Naive thymus-derived CD4-positive, alpha-beta T cell (primary cell): ENCODE measurements at regions of chr5 and their contacts with region 1.

Region 1: GRCh38 chr5:91280362-91281269 is 102.5 kb downstream of the ARRDC3 start:
- DNase-seq: peak; percentile 45 to 89 (median 63)
- ATAC-seq: peak; percentile 90
- H3K4me3 ChIP-seq: peak overlapping the region; percentile 76
- H3K4me3 Mint-ChIP-seq: peak overlapping the region; percentile 88 to 99 (median 92)
- H3K27ac ChIP-seq: peak overlapping the region; percentile 41
- H3K27ac Mint-ChIP-seq: peak overlapping the region; percentile 74 to 94 (median 91)
- H3K4me1 ChIP-seq: peaks cover 0 to 4% of the 10 kb centered on the region in 2 donors
- H3K4me1 Mint-ChIP-seq: peaks cover 13 to 34% (median 23%) of the 10 kb centered on the region in 7 donors
- H3K27me3 ChIP-seq: no peaks in the 10 kb centered on the region
- H3K27me3 Mint-ChIP-seq: peaks cover 0 to 13% (median 0%) of the 10 kb centered on the region in 5 donors

Region 2: GRCh38 chr5:90409318-90410177 is 871.1 kb before region 1 on chr5 and contains the start of gene CETN3:
- CTCF ChIA-PET with region 1: no interaction called
- POLR2A ChIA-PET with region 1: no interaction called
- intact Hi-C with region 1: loop called in 1 of 2 experiments (anchors 1 kb)
- DNase-seq: peak; percentile 72 to 93 (median 88)
- ATAC-seq: peak; percentile 94
- H3K4me3 ChIP-seq: peak within 1 kb of the TSS; percentile 100
- H3K4me3 Mint-ChIP-seq: no peak within 1 kb of the TSS
- H3K27ac ChIP-seq: peak within 1 kb of the TSS; percentile 93
- H3K27ac Mint-ChIP-seq: no peak within 1 kb of the TSS
- H3K4me1 ChIP-seq: peaks cover 7 to 13% of the 10 kb centered on the region in 2 donors
- H3K4me1 Mint-ChIP-seq: peaks cover 12 to 26% (median 16%) of the 10 kb centered on the region in 7 donors
- H3K27me3 ChIP-seq: no peaks in the 10 kb centered on the region
- H3K27me3 Mint-ChIP-seq: peaks cover 0 to 4% (median 0%) of the 10 kb centered on the region in 5 donors
- total RNA-seq, gene CETN3: 4.4 to 31.0 (median 22.1) TPM

Region 3: GRCh38 chr5:90474235-90475109 is 806.1 kb before region 1 on chr5 and contains the starts of genes MBLAC2 and POLR3G:
- CTCF ChIA-PET with region 1: no interaction called
- POLR2A ChIA-PET with region 1: no interaction called
- intact Hi-C with region 1: loop called in 1 of 2 experiments (anchors 1 kb)
- DNase-seq: peak; percentile 80 to 93 (median 92)
- ATAC-seq: peak; percentile 95
- H3K4me3 ChIP-seq: peak within 1 kb of the TSS; percentile 95
- H3K4me3 Mint-ChIP-seq: peak within 1 kb of the TSS; percentile 90 to 99 (median 98)
- H3K27ac ChIP-seq: peak within 1 kb of the TSS; percentile 76
- H3K27ac Mint-ChIP-seq: peak within 1 kb of the TSS; percentile 86 to 98 (median 94)
- H3K4me1 ChIP-seq: peaks cover 15 to 16% of the 10 kb centered on the region in 2 donors
- H3K4me1 Mint-ChIP-seq: peaks cover 18 to 51% (median 43%) of the 10 kb centered on the region in 7 donors
- H3K27me3 ChIP-seq: no peaks in the 10 kb centered on the region
- H3K27me3 Mint-ChIP-seq: no peaks in the 10 kb centered on the region
- total RNA-seq, gene MBLAC2: 5.2 to 17.6 (median 7.1) TPM
- total RNA-seq, gene POLR3G: 0.51 to 3.0 (median 1.5) TPM

Region 4: DNA sequence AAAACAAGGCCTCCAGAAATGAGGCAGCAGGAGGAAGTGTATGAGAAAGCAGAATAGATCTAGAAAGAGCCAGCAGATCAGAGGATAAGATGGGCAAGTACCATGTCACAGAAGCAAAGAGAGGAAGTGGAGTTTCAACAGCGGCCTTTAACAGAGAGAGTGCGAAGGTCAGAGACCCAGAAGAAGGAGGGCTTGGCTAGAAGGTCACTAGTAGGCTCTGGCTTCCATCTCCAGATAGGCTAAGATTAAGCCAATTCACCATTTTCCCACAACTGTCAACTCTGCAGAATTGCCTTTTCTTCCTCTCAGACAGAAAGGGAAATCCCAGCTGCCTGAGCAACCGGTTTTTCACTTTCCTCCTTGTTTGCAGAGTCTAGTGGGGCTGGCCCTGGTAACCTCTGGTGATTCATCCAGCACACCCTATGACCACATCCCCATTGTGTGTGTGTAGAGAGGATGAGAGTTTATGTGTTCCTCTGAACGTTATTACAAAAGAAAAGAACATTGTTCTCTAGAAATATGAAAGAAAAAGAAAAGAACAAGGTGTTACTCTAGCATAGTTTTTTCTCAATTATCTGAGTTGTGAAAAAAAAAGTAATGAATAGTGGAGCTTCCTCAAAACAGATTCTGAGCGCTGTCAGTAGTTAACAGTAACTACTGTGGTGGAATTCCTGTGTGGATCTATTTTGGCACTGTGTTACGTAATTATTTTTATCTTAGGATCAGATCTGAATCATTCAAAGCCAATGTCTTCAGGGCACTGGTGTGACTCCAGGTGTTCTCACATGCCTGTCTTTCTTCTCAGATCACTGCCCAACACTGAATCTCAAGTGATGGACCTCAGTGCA is 117.9 kb before region 1 on chr5:
- CTCF ChIA-PET with region 1: no interaction called
- POLR2A ChIA-PET with region 1: no interaction called
- intact Hi-C with region 1: loop called in 1 of 2 experiments (anchors 5 kb)
- DNase-seq: peak in 2 of 9 donors; percentile 8 to 64
- ATAC-seq: peak; percentile 93
- H3K4me3 ChIP-seq: no peak overlapping the region
- H3K4me3 Mint-ChIP-seq: peak overlapping the region in 3 of 10 donors; percentile 0 to 46 (median 1)
- H3K27ac ChIP-seq: no peak overlapping the region
- H3K27ac Mint-ChIP-seq: peak overlapping the region in 4 of 9 donors; percentile 10 to 71 (median 35)
- H3K4me1 ChIP-seq: no peaks in the 10 kb centered on the region
- H3K4me1 Mint-ChIP-seq: peaks cover 5 to 24% (median 13%) of the 10 kb centered on the region in 7 donors
- H3K27me3 ChIP-seq: no peaks in the 10 kb centered on the region
- H3K27me3 Mint-ChIP-seq: no peaks in the 10 kb centered on the region

Region 5: GRCh38 chr5:91245871-91246270 is 34.7 kb before region 1 on chr5:
- CTCF ChIA-PET with region 1: no interaction called
- POLR2A ChIA-PET with region 1: no interaction called
- intact Hi-C with region 1: loop called in 1 of 2 experiments (anchors 5 kb)
- DNase-seq: no peak
- ATAC-seq: no peak
- H3K4me3 ChIP-seq: no peak overlapping the region
- H3K4me3 Mint-ChIP-seq: no peak overlapping the region
- H3K27ac ChIP-seq: no peak overlapping the region
- H3K27ac Mint-ChIP-seq: no peak overlapping the region
- H3K4me1 ChIP-seq: no peaks in the 10 kb centered on the region
- H3K4me1 Mint-ChIP-seq: peaks cover 0 to 3% (median 0%) of the 10 kb centered on the region in 7 donors
- H3K27me3 ChIP-seq: no peaks in the 10 kb centered on the region
- H3K27me3 Mint-ChIP-seq: peaks cover 0 to 6% (median 3%) of the 10 kb centered on the region in 5 donors

Region 6: DNA sequence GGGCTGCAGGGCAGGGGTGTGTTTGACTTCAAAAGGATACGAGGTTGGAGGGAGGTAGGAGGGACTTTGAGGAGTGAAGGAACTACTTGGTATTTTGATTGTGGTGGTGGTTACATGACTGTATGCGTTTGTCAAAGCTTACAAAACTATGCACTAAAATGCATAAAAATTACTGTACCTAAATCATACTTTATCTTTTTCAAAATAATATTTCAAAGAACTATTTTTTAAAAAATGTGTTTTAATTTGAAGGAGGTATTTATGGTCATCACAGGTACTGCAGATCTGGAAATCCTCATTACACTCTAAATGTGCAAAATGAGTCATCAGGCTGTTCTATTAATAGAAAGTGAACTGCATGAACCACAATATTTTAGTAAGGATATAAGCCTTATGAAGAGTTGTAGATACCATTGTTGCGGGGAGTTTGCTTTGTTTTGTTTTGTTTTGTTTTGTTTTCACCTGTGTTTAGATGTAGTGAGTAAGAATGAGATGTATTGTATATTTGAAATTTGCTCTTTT is 14.4 kb before region 1 on chr5:
- CTCF ChIA-PET with region 1: interaction called, 5 read pairs
- POLR2A ChIA-PET with region 1: interaction called, 3 read pairs
- intact Hi-C with region 1: loop called (anchors 1 kb)
- DNase-seq: no peak
- ATAC-seq: peak; percentile 53
- H3K4me3 ChIP-seq: no peak overlapping the region
- H3K4me3 Mint-ChIP-seq: no peak overlapping the region
- H3K27ac ChIP-seq: no peak overlapping the region
- H3K27ac Mint-ChIP-seq: no peak overlapping the region
- H3K4me1 ChIP-seq: no peaks in the 10 kb centered on the region
- H3K4me1 Mint-ChIP-seq: peaks cover 9 to 27% (median 18%) of the 10 kb centered on the region in 7 donors
- H3K27me3 ChIP-seq: no peaks in the 10 kb centered on the region
- H3K27me3 Mint-ChIP-seq: peaks cover 0 to 14% (median 0%) of the 10 kb centered on the region in 5 donors

Region 7: DNA sequence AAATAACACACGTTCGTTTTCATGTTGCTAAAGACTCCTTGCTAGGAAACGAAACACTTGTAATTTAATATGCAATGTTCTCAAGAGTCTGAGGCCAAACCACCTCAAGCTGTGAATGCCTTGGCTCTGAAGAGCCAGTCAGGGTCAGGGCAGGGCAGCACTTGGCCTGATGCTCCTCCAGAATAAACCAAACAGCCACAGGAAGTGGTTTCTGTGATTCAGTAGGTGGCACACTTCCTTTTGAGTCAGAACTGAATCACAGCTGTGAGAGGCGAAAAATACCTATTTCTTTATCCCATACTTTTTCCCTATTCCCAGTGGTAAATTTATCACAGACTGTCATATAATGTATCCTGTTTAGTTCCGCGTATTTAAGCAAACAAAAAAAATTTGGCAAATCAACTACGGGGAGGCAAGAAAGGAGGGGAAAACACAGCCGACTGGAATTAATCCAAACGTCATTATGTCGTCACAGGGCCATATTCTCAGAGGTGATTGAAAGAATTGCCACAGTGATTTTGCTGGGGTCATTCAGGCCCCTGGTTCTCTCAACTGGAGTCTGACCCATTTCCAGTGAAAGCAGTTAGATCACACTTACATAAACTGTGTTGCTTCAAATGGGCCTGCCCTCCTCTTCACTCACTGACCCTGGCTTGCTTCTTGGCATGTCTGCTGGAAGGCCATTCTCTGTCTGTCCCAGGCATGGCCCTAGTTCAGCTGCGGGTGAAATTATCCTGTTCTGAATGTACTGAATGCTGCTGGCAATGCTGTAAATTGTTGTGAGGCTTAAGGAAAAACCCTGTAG is 31.3 kb after region 1 on chr5:
- CTCF ChIA-PET with region 1: no interaction called
- POLR2A ChIA-PET with region 1: interaction called, 44 read pairs
- intact Hi-C with region 1: loop called (anchors 1 kb)
- DNase-seq: peak; percentile 17 to 81 (median 68)
- ATAC-seq: peak; percentile 86
- H3K4me3 ChIP-seq: peak overlapping the region; percentile 15
- H3K4me3 Mint-ChIP-seq: peak overlapping the region; percentile 59 to 82 (median 76)
- H3K27ac ChIP-seq: peak overlapping the region; percentile 53
- H3K27ac Mint-ChIP-seq: peak overlapping the region; percentile 84 to 98 (median 95)
- H3K4me1 ChIP-seq: peaks cover 33 to 39% of the 10 kb centered on the region in 2 donors
- H3K4me1 Mint-ChIP-seq: peaks cover 29 to 55% (median 48%) of the 10 kb centered on the region in 7 donors
- H3K27me3 ChIP-seq: no peaks in the 10 kb centered on the region
- H3K27me3 Mint-ChIP-seq: no peaks in the 10 kb centered on the region